PC-3 (cell line): ENCODE measurements at regions of chr2 and their contacts with region 1.

Region 1: DNA sequence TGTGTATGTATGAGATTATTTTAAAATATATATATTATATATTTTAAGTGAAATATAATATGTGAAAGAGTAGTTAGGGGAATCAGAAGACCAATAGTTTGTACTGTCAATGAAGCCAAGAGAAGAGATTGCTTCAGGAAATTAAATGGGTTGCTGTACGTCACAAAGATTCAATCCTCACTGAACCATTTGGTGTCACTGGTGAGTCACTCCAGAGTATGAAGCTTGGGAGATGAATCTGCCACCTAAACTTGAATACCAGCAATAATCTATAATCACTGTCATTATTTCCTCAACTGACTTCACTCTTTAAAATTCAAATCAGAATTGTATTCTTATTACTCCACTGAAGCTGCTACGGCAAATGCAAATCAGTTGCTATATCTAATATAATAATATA is 41.9 kb upstream of the SCN9A start:
- DNase-seq: peak; percentile 72
- ATAC-seq: 0 out of 2 replicates have a peak, but pooled peaks have one; percentile 43
- H3K4me3 ChIP-seq: no peak overlapping the region
- H3K27ac ChIP-seq: no peak overlapping the region
- H3K4me1 ChIP-seq: no peaks in the 10 kb centered on the region
- H3K27me3 ChIP-seq: no peaks in the 10 kb centered on the region
- CTCF ChIP-seq: peak; percentile 44

Region 2: GRCh38 chr2:166057370-166058164 is 360.1 kb before region 1 on chr2:
- CTCF ChIA-PET with region 1: no interaction called
- POLR2A ChIA-PET with region 1: no interaction called
- intact Hi-C with region 1: loop called (anchors 1 kb)
- DNase-seq: peak; percentile 68
- ATAC-seq: no peak
- H3K4me3 ChIP-seq: no peak overlapping the region
- H3K27ac ChIP-seq: no peak overlapping the region
- H3K4me1 ChIP-seq: peaks cover 5% of the 10 kb centered on the region
- H3K27me3 ChIP-seq: peaks cover 39% of the 10 kb centered on the region
- CTCF ChIP-seq: peak; percentile 94

Region 3: GRCh38 chr2:166180951-166181812 is 236.5 kb before region 1 on chr2:
- CTCF ChIA-PET with region 1: interaction called, 7 read pairs
- POLR2A ChIA-PET with region 1: no interaction called
- intact Hi-C with region 1: loop called (anchors 1 kb)
- DNase-seq: peak; percentile 93
- ATAC-seq: peak; percentile 75
- H3K4me3 ChIP-seq: no peak overlapping the region
- H3K27ac ChIP-seq: no peak overlapping the region
- H3K4me1 ChIP-seq: peaks cover 20% of the 10 kb centered on the region
- H3K27me3 ChIP-seq: peaks cover 4% of the 10 kb centered on the region; the same call in 1 of the 2 replicates
- CTCF ChIP-seq: peak; percentile 88

Region 4: GRCh38 chr2:166335284-166335683 is 82.4 kb before region 1 on chr2:
- CTCF ChIA-PET with region 1: no interaction called
- POLR2A ChIA-PET with region 1: no interaction called
- intact Hi-C with region 1: no loop called
- DNase-seq: peak; percentile 25
- ATAC-seq: no peak
- H3K4me3 ChIP-seq: no peak overlapping the region
- H3K27ac ChIP-seq: no peak overlapping the region
- H3K4me1 ChIP-seq: peaks cover 51% of the 10 kb centered on the region
- H3K27me3 ChIP-seq: no peaks in the 10 kb centered on the region
- CTCF ChIP-seq: no peak

Region 5: DNA sequence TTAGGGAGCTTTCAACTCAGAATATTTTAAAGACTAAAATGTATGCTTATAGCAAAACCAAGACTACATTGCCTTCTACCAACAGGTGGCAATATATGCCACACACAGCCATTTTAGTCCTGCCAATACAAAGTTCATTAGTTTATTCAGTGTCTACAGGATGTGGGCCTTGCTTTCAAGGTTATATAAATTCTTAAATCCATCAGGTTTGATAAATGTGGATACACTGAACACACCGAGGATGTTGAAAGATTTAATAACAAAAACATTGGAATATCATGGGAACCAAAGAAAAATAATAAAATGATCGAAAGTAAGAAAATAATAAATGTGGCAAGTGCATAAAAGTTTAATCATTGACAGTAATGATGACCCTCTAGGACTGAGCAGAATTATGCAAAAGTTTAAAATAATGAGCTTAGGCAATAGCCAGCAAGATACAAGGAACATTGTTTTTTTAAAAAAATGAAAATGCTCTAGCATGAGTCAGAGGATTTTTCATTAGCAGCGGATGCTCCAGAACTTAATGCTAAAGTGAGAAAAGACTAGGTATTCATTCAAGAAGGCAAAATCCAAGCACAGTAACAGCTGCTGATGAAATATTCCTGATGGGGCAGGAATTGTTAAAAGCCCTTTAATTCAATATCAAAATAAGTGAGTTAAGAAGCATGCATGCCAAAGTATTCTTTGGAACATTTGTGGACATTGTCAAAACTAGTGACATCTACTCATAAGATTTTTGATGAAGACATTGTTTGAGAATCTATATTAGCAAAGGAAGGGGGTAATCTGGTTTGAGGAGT is 56.1 kb before region 1 on chr2:
- CTCF ChIA-PET with region 1: interaction called, 5 read pairs
- POLR2A ChIA-PET with region 1: no interaction called
- intact Hi-C with region 1: loop called (anchors 1 kb)
- DNase-seq: peak; percentile 73
- ATAC-seq: peak; percentile 93
- H3K4me3 ChIP-seq: no peak overlapping the region
- H3K27ac ChIP-seq: no peak overlapping the region
- H3K4me1 ChIP-seq: peaks cover 12% of the 10 kb centered on the region
- H3K27me3 ChIP-seq: no peaks in the 10 kb centered on the region
- CTCF ChIP-seq: peak; percentile 95

Region 6: GRCh38 chr2:166384774-166385173 is 32.9 kb before region 1 on chr2:
- CTCF ChIA-PET with region 1: interaction called, 3 read pairs
- POLR2A ChIA-PET with region 1: no interaction called
- intact Hi-C with region 1: loop called (anchors 2 kb)
- DNase-seq: peak; percentile 85
- ATAC-seq: peak; percentile 27; the same call in 1 of the 2 replicates
- H3K4me3 ChIP-seq: no peak overlapping the region
- H3K27ac ChIP-seq: no peak overlapping the region
- H3K4me1 ChIP-seq: no peaks in the 10 kb centered on the region
- H3K27me3 ChIP-seq: no peaks in the 10 kb centered on the region
- CTCF ChIP-seq: peak; percentile 85

Region 7: DNA sequence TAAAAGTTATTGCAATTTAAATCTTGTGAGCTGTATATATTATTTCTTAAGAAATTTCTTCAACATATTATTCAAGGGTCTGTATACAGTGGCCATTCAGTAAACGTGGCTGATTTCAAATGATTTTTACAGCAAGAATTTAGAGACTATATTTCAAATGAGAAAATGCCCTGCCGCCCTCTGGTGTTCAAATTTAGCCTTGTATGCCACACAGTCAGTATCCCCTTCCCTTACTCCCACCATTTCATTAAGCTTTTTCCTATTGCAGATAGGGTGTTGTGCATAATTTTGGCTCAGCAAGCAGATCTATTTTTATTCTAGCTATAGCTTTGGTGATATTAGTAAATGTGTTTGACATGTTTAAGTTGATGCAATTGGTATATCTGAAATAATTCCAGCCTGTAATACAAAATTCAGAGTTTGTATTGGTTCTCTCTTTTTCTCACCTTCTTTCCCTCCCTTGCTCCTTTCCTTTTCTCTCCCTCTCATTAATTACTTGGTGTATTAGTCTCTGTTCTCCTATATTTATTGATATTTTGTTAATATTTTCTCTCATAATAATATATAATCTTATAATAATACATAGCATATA is 99.1 kb after region 1 on chr2:
- CTCF ChIA-PET with region 1: no interaction called
- POLR2A ChIA-PET with region 1: no interaction called
- intact Hi-C with region 1: loop called (anchors 1 kb)
- DNase-seq: peak; percentile 65
- ATAC-seq: peak; percentile 78
- H3K4me3 ChIP-seq: no peak overlapping the region
- H3K27ac ChIP-seq: no peak overlapping the region
- H3K4me1 ChIP-seq: no peaks in the 10 kb centered on the region
- H3K27me3 ChIP-seq: peaks cover 61% of the 10 kb centered on the region
- CTCF ChIP-seq: peak; percentile 89